CD4-positive, alpha-beta T cell (primary cell): ENCODE measurements at regions of chr22 and their contacts with region 1.

Region 1: DNA sequence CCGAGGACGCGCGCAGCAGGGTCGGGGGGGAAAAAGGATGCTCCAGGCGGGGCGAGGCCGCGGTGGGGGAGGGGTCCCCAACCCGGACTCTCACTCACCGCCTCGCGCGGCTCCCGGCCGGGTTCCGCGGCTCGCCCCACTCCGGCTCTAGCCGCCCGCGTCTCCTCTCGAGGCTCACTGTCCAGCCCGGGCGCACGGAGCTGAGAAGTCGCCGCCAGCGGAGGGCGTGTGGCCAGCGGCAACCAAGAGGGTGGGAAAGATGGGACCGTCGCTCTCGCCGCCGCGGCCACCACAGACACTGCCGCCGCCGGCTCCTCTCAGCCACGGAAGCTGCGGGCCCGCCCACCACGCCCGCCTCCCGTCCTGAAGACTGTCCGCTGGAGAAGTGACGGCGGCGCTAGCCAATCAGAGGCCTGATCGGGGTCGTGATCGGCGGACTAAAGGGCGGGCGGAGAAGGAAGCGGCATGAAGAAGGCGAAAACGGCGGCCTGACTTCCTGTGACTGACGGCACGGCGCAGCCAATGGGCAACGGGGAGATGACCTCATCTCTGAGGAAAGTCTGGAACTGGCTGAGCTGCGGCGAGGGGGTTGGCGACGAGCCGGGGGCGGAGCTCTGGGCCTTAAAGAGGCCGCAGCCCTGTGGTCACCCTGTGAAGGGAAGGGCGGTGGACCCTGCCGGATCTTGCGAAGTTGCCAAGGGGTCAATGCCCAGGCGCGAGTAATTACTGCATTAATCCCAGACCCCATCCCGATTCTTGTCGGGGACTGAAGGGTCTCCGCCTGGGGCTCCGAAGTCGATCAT is at the start of gene MRTFA:
- DNase-seq: peak; percentile 97 to 100 (median 99)
- ATAC-seq: peak; percentile 93
- H3K4me3 ChIP-seq: peak within 1 kb of the TSS; percentile 96
- H3K4me3 Mint-ChIP-seq: peak within 1 kb of the TSS; percentile 100
- H3K27ac ChIP-seq: peak within 1 kb of the TSS; percentile 88 to 93
- H3K27ac Mint-ChIP-seq: peak within 1 kb of the TSS; percentile 99
- H3K4me1 ChIP-seq: peaks cover 38% of the 10 kb centered on the region
- H3K4me1 Mint-ChIP-seq: peaks cover 48% of the 10 kb centered on the region
- H3K27me3 ChIP-seq: no peaks in the 10 kb centered on the region
- H3K27me3 Mint-ChIP-seq: no peaks in the 10 kb centered on the region
- CTCF ChIP-seq: no peak
- total RNA-seq, gene MRTFA: 55.3 to 58.9 TPM

Region 2: GRCh38 chr22:40368016-40368415 is 268.6 kb before region 1 on chr22:
- CTCF ChIA-PET with region 1: no interaction called
- POLR2A ChIA-PET with region 1: no interaction called
- intact Hi-C with region 1: loop called in 1 of 2 experiments (anchors 5 kb)
- DNase-seq: no peak
- ATAC-seq: no peak
- H3K4me3 ChIP-seq: no peak overlapping the region
- H3K4me3 Mint-ChIP-seq: peak overlapping the region; percentile 13
- H3K27ac ChIP-seq: no peak overlapping the region
- H3K27ac Mint-ChIP-seq: peak overlapping the region; percentile 39
- H3K4me1 ChIP-seq: peaks cover 14% of the 10 kb centered on the region
- H3K4me1 Mint-ChIP-seq: peaks cover 14% of the 10 kb centered on the region
- H3K27me3 ChIP-seq: no peaks in the 10 kb centered on the region
- H3K27me3 Mint-ChIP-seq: no peaks in the 10 kb centered on the region
- CTCF ChIP-seq: no peak

Region 3: GRCh38 chr22:40525249-40525884 is 111.2 kb before region 1 on chr22:
- CTCF ChIA-PET with region 1: interaction called, 10 read pairs
- POLR2A ChIA-PET with region 1: interaction called, 72 read pairs
- intact Hi-C with region 1: no loop called
- DNase-seq: peak; percentile 67 to 85 (median 73)
- ATAC-seq: peak; percentile 82
- H3K4me3 ChIP-seq: no peak overlapping the region
- H3K4me3 Mint-ChIP-seq: no peak overlapping the region
- H3K27ac ChIP-seq: no peak overlapping the region
- H3K27ac Mint-ChIP-seq: peak overlapping the region; percentile 22
- H3K4me1 ChIP-seq: peaks cover 18% of the 10 kb centered on the region
- H3K4me1 Mint-ChIP-seq: peaks cover 55% of the 10 kb centered on the region
- H3K27me3 ChIP-seq: no peaks in the 10 kb centered on the region
- H3K27me3 Mint-ChIP-seq: no peaks in the 10 kb centered on the region
- CTCF ChIP-seq: peak; percentile 97

Region 4: DNA sequence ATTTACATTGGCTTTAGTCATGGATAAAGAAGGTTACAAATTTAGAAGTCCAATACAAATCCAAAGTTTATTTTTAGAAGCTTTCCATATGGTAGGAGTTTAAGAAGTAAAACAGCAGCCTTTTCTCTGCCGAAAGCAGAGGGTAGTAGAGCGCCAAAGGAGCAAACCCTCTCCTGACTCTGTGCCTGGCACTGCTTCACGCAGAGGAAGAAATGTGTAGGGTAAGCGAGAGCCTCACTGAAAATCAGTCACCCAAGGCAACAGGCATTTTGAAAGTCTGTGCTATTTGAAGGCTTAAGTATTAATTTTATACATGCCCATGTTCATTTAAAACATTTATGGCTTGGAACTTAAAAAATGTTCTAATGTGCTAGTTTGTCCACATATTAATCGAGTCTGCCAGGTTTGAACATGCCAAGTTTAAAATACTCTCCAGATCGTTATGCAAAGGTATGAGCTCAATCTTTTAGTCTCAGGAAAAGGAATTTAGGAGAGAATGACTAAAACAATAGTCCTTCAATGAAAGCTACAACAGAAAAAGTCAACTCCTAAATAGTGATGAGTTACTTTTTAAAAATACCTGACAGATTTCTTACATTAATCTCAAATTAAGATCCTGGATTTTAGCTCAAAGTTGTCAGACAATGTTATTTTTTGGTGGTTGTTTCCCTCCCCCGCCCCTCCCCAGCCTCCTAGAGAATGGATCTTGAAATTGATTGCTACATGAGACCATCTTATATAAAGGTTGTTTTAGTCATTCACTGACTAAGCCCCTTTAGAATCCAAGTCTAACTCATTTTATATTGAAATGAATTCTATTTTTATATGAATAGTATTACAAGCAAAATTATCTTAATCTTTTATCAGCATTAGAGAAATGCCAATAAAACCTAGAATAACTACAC is 38.8 kb before region 1 on chr22:
- CTCF ChIA-PET with region 1: no interaction called
- POLR2A ChIA-PET with region 1: no interaction called
- intact Hi-C with region 1: no loop called
- DNase-seq: no peak
- ATAC-seq: no peak
- H3K4me3 ChIP-seq: no peak overlapping the region
- H3K4me3 Mint-ChIP-seq: no peak overlapping the region
- H3K27ac ChIP-seq: no peak overlapping the region
- H3K27ac Mint-ChIP-seq: no peak overlapping the region
- H3K4me1 ChIP-seq: peaks cover 3% of the 10 kb centered on the region
- H3K4me1 Mint-ChIP-seq: peaks cover 63% of the 10 kb centered on the region
- H3K27me3 ChIP-seq: no peaks in the 10 kb centered on the region
- H3K27me3 Mint-ChIP-seq: no peaks in the 10 kb centered on the region
- CTCF ChIP-seq: no peak

Region 5: GRCh38 chr22:40651563-40652501 is 15.3 kb after region 1 on chr22:
- CTCF ChIA-PET with region 1: interaction called, 15 read pairs
- POLR2A ChIA-PET with region 1: interaction called, 16 read pairs
- intact Hi-C with region 1: no loop called
- DNase-seq: peak; percentile 37 to 90 (median 60)
- ATAC-seq: peak; percentile 93
- H3K4me3 ChIP-seq: peak overlapping the region; percentile 57
- H3K4me3 Mint-ChIP-seq: peak overlapping the region; percentile 91
- H3K27ac ChIP-seq: peak overlapping the region in 1 of 2 donors; percentile 37
- H3K27ac Mint-ChIP-seq: peak overlapping the region; percentile 92
- H3K4me1 ChIP-seq: peaks cover 16% of the 10 kb centered on the region
- H3K4me1 Mint-ChIP-seq: peaks cover 18% of the 10 kb centered on the region
- H3K27me3 ChIP-seq: no peaks in the 10 kb centered on the region
- H3K27me3 Mint-ChIP-seq: no peaks in the 10 kb centered on the region
- CTCF ChIP-seq: no peak

Region 6: GRCh38 chr22:40668611-40669411 is 32.2 kb after region 1 on chr22:
- CTCF ChIA-PET with region 1: no interaction called
- POLR2A ChIA-PET with region 1: no interaction called
- intact Hi-C with region 1: no loop called
- DNase-seq: no peak
- ATAC-seq: no peak
- H3K4me3 ChIP-seq: no peak overlapping the region
- H3K4me3 Mint-ChIP-seq: no peak overlapping the region
- H3K27ac ChIP-seq: no peak overlapping the region
- H3K27ac Mint-ChIP-seq: no peak overlapping the region
- H3K4me1 ChIP-seq: peaks cover 4% of the 10 kb centered on the region
- H3K4me1 Mint-ChIP-seq: peaks cover 12% of the 10 kb centered on the region
- H3K27me3 ChIP-seq: no peaks in the 10 kb centered on the region
- H3K27me3 Mint-ChIP-seq: no peaks in the 10 kb centered on the region
- CTCF ChIP-seq: no peak

Region 7: GRCh38 chr22:40703174-40703573 is 66.6 kb after region 1 on chr22:
- CTCF ChIA-PET with region 1: no interaction called
- POLR2A ChIA-PET with region 1: no interaction called
- intact Hi-C with region 1: no loop called
- DNase-seq: no peak
- ATAC-seq: no peak
- H3K4me3 ChIP-seq: no peak overlapping the region
- H3K4me3 Mint-ChIP-seq: no peak overlapping the region
- H3K27ac ChIP-seq: no peak overlapping the region
- H3K27ac Mint-ChIP-seq: no peak overlapping the region
- H3K4me1 ChIP-seq: peaks cover 7% of the 10 kb centered on the region
- H3K4me1 Mint-ChIP-seq: peaks cover 19% of the 10 kb centered on the region
- H3K27me3 ChIP-seq: no peaks in the 10 kb centered on the region
- H3K27me3 Mint-ChIP-seq: no peaks in the 10 kb centered on the region
- CTCF ChIP-seq: no peak

Region 8: GRCh38 chr22:41038732-41039445 is 402.3 kb after region 1 on chr22:
- CTCF ChIA-PET with region 1: no interaction called
- POLR2A ChIA-PET with region 1: no interaction called
- intact Hi-C with region 1: no loop called
- DNase-seq: no peak
- ATAC-seq: no peak
- H3K4me3 ChIP-seq: no peak overlapping the region
- H3K4me3 Mint-ChIP-seq: no peak overlapping the region
- H3K27ac ChIP-seq: no peak overlapping the region
- H3K27ac Mint-ChIP-seq: no peak overlapping the region
- H3K4me1 ChIP-seq: no peaks in the 10 kb centered on the region
- H3K4me1 Mint-ChIP-seq: no peaks in the 10 kb centered on the region
- H3K27me3 ChIP-seq: no peaks in the 10 kb centered on the region
- H3K27me3 Mint-ChIP-seq: no peaks in the 10 kb centered on the region
- CTCF ChIP-seq: no peak

Region 9: GRCh38 chr22:41197038-41197972 is 560.7 kb after region 1 on chr22:
- CTCF ChIA-PET with region 1: no interaction called
- POLR2A ChIA-PET with region 1: no interaction called
- intact Hi-C with region 1: loop called in 1 of 2 experiments (anchors 5 kb)
- DNase-seq: peak; percentile 62 to 93 (median 76)
- ATAC-seq: peak; percentile 85
- H3K4me3 ChIP-seq: peak overlapping the region; percentile 92
- H3K4me3 Mint-ChIP-seq: peak overlapping the region; percentile 95
- H3K27ac ChIP-seq: no peak overlapping the region
- H3K27ac Mint-ChIP-seq: peak overlapping the region; percentile 28
- H3K4me1 ChIP-seq: peaks cover 19% of the 10 kb centered on the region
- H3K4me1 Mint-ChIP-seq: peaks cover 14% of the 10 kb centered on the region
- H3K27me3 ChIP-seq: no peaks in the 10 kb centered on the region
- H3K27me3 Mint-ChIP-seq: no peaks in the 10 kb centered on the region
- CTCF ChIP-seq: no peak